CD4-positive, alpha-beta T cell (primary cell): ENCODE measurements at regions of chr5 and their contacts with region 1.

Region 1: DNA sequence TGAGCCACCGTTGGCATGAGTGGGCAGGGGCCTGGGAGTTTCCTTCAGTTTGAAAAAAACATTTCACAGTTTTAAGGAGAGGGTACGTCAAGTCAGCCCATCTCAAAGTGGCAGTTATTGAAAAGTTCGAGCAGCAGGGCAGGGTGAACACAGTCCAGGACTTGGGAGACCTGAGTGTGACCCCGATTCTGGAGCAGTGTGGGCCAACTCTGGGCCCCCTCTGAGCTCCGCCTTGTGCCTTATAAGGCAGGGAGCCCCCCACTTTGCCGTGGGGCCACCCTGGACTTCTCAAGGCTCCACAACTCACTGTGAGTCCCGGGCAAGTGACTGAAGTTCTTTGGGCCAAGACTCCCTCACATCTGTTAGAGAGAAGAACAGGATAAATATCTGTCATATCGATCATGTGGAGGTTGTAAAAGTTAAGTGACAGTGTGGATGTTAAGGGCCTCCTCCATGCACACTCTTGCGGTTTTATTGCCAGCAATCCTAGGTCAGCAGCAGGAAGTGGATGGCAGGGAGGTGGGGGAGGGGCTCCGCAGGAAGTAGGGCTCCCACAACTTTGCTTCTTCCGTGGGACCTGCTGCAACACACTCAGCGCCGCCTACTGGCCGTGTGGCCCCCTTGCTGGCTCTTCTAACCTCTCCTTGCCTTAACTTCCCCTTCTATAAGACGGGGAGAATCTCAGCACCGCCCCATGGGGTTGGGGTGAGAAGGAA is 38.4 kb downstream of the HRH2 start:
- DNase-seq: peak; percentile 50 to 87 (median 70)
- ATAC-seq: peak; percentile 80
- H3K4me3 ChIP-seq: no peak overlapping the region
- H3K4me3 Mint-ChIP-seq: peak overlapping the region; percentile 18
- H3K27ac ChIP-seq: peak overlapping the region in 1 of 2 donors; percentile 13
- H3K27ac Mint-ChIP-seq: peak overlapping the region; percentile 61
- H3K4me1 ChIP-seq: peaks cover 28% of the 10 kb centered on the region
- H3K4me1 Mint-ChIP-seq: peaks cover 53% of the 10 kb centered on the region
- H3K27me3 ChIP-seq: no peaks in the 10 kb centered on the region
- H3K27me3 Mint-ChIP-seq: no peaks in the 10 kb centered on the region
- CTCF ChIP-seq: peak; percentile 88

Region 2: GRCh38 chr5:175354964-175355363 is 341.3 kb before region 1 on chr5:
- CTCF ChIA-PET with region 1: no interaction called
- POLR2A ChIA-PET with region 1: no interaction called
- intact Hi-C with region 1: no loop called
- DNase-seq: no peak
- ATAC-seq: no peak
- H3K4me3 ChIP-seq: no peak overlapping the region
- H3K4me3 Mint-ChIP-seq: no peak overlapping the region
- H3K27ac ChIP-seq: no peak overlapping the region
- H3K27ac Mint-ChIP-seq: no peak overlapping the region
- H3K4me1 ChIP-seq: no peaks in the 10 kb centered on the region
- H3K4me1 Mint-ChIP-seq: no peaks in the 10 kb centered on the region
- H3K27me3 ChIP-seq: peaks cover 0 to 4% of the 10 kb centered on the region in 2 experiments
- H3K27me3 Mint-ChIP-seq: peaks cover 35% of the 10 kb centered on the region
- CTCF ChIP-seq: no peak

Region 3: GRCh38 chr5:175489693-175490443 is 206.4 kb before region 1 on chr5:
- CTCF ChIA-PET with region 1: no interaction called
- POLR2A ChIA-PET with region 1: no interaction called
- intact Hi-C with region 1: no loop called
- DNase-seq: no peak
- ATAC-seq: no peak
- H3K4me3 ChIP-seq: no peak overlapping the region
- H3K4me3 Mint-ChIP-seq: no peak overlapping the region
- H3K27ac ChIP-seq: peak overlapping the region in 1 of 2 donors; percentile 30
- H3K27ac Mint-ChIP-seq: peak overlapping the region; percentile 46
- H3K4me1 ChIP-seq: peaks cover 27% of the 10 kb centered on the region
- H3K4me1 Mint-ChIP-seq: peaks cover 65% of the 10 kb centered on the region
- H3K27me3 ChIP-seq: no peaks in the 10 kb centered on the region
- H3K27me3 Mint-ChIP-seq: no peaks in the 10 kb centered on the region
- CTCF ChIP-seq: no peak

Region 4: DNA sequence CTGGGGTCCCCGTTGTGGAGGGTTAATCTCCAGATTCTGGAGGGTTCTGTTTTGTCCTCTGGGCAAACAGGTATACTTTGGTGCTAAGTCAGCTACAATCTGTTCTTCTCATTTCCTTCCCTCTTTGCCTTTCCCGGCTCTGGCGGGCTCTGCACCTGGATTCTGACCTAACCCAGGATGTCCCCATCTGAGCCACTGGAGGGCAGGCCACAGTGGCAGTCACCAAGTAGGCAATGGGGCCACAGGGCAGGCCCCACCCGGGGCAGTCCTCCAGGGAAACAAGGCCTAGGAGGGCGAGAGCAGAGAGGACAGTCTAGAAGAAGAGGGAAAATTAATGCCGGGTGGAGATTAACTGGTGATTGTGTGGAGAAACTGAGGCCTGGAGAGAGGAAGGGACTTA is 78.8 kb before region 1 on chr5:
- CTCF ChIA-PET with region 1: no interaction called
- POLR2A ChIA-PET with region 1: no interaction called
- intact Hi-C with region 1: loop called in 1 of 2 experiments (anchors 5 kb)
- DNase-seq: peak in 3 of 14 experiments; percentile 9 to 26 (median 15)
- ATAC-seq: no peak
- H3K4me3 ChIP-seq: no peak overlapping the region
- H3K4me3 Mint-ChIP-seq: no peak overlapping the region
- H3K27ac ChIP-seq: no peak overlapping the region
- H3K27ac Mint-ChIP-seq: no peak overlapping the region
- H3K4me1 ChIP-seq: no peaks in the 10 kb centered on the region
- H3K4me1 Mint-ChIP-seq: peaks cover 10% of the 10 kb centered on the region
- H3K27me3 ChIP-seq: no peaks in the 10 kb centered on the region
- H3K27me3 Mint-ChIP-seq: no peaks in the 10 kb centered on the region
- CTCF ChIP-seq: no peak

Region 5: DNA sequence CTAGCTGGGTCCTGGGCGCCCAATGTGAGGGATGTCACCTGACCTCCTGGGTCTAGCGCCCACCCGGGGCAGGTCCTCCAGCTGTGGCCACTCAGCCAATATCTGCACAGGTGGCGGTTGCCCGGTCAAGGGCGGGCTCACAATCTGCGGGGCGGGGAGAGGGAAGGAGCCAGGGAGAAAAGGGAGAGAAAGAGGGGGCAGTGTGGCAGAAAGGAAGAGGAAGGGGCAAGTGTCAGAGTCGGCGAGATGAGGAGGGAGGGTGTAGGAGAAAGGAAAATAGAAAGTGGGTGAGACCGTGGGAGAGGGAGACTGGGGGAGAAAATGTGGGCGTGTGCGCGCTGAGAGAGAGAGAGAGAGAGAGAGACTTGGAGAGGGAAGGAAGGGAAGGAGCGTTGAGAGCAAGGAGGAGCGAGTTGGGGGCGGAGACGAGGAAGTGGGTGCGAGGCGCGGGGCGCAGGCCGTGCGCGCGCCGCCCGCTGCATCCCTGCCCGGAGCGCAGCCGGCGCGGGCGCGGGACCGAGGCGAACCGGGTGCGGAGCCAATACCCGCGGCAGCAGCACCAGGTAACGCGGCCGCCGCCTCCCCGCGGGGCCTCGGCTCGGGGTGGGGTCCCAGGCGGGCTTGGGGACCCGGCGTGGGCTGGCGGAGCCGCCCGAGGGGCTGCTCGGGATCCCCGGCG is 38.6 kb before region 1 on chr5 and contains the start of gene HRH2:
- CTCF ChIA-PET with region 1: no interaction called
- POLR2A ChIA-PET with region 1: interaction called, 3 read pairs
- intact Hi-C with region 1: loop called (anchors 2 to 5 kb)
- DNase-seq: peak in 13 of 14 experiments; percentile 14 to 73 (median 41)
- ATAC-seq: peak; percentile 55
- H3K4me3 ChIP-seq: peak within 1 kb of the TSS; percentile 92
- H3K4me3 Mint-ChIP-seq: peak within 1 kb of the TSS; percentile 97
- H3K27ac ChIP-seq: no peak within 1 kb of the TSS
- H3K27ac Mint-ChIP-seq: peak within 1 kb of the TSS; percentile 75
- H3K4me1 ChIP-seq: peaks cover 74% of the 10 kb centered on the region
- H3K4me1 Mint-ChIP-seq: peaks cover 95% of the 10 kb centered on the region
- H3K27me3 ChIP-seq: no peaks in the 10 kb centered on the region
- H3K27me3 Mint-ChIP-seq: no peaks in the 10 kb centered on the region
- CTCF ChIP-seq: no peak
- total RNA-seq, gene HRH2: 2.9 to 3.4 TPM